ENCODE measurements at regions of chr17 and their contacts with region 1.

Region 1: GRCh38 chr17:62892870-62893338 is 73.1 kb upstream of the TANC2 start:
- DNase-seq: peak; percentile 33
- H3K4me3 ChIP-seq: no peak overlapping the region
- H3K27me3 ChIP-seq: no peaks in the 10 kb centered on the region
- CTCF ChIP-seq: no peak

Region 2: DNA sequence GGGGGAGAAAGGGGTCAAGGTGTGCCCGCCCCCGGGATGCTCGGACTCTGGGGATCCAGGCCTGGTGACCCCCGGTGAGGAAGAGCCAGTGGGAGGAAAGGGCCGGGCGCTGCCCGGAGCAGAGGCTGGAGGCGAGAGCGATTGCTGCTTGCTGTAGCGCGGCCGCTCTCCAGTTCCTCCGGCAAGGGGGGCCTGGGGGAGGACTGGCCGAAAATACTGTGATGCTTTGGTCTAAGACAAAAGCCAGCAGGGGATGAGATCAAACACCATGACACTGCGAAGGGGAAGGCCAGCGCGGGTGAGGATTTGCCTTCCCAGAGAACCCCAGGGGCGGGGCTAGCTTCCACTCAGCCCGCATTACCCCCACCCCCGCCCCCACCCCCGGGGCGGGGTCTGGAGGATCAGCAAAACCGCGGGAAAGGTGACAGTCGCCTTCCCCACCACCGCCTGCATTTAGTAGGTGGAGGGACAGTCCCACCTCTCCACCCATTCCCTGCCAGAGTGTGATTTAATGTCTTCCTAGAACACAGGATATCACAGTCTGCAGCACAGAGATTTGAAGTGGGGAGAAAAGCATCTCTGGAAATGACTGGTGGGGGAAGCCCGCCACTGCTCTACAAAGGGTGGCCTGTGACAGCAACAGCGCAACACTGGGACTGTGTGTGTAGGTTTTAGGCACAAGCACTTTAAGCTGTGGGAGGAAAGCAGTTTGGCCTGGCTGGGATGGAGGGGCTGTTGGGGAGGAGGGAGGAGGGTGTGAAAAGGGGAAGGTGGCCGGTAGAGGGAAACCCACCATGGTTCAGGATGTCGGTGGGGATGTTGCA is 239.7 kb before region 1 on chr17:
- CTCF ChIA-PET with region 1: no interaction called
- POLR2A ChIA-PET with region 1: no interaction called
- DNase-seq: no peak
- H3K4me3 ChIP-seq: peak overlapping the region; percentile 38
- H3K27me3 ChIP-seq: no peaks in the 10 kb centered on the region
- CTCF ChIP-seq: peak; percentile 21

Region 3: GRCh38 chr17:62906881-62907280 is 14.0 kb after region 1 on chr17:
- CTCF ChIA-PET with region 1: no interaction called
- POLR2A ChIA-PET with region 1: interaction called, 14 read pairs
- DNase-seq: no peak
- H3K4me3 ChIP-seq: no peak overlapping the region
- H3K27me3 ChIP-seq: peaks cover 3% of the 10 kb centered on the region; the same call in 1 of the 2 replicates
- CTCF ChIP-seq: no peak